GM12878 (cell line): ENCODE measurements at regions of chr12 and their contacts with region 1.

Region 1: DNA sequence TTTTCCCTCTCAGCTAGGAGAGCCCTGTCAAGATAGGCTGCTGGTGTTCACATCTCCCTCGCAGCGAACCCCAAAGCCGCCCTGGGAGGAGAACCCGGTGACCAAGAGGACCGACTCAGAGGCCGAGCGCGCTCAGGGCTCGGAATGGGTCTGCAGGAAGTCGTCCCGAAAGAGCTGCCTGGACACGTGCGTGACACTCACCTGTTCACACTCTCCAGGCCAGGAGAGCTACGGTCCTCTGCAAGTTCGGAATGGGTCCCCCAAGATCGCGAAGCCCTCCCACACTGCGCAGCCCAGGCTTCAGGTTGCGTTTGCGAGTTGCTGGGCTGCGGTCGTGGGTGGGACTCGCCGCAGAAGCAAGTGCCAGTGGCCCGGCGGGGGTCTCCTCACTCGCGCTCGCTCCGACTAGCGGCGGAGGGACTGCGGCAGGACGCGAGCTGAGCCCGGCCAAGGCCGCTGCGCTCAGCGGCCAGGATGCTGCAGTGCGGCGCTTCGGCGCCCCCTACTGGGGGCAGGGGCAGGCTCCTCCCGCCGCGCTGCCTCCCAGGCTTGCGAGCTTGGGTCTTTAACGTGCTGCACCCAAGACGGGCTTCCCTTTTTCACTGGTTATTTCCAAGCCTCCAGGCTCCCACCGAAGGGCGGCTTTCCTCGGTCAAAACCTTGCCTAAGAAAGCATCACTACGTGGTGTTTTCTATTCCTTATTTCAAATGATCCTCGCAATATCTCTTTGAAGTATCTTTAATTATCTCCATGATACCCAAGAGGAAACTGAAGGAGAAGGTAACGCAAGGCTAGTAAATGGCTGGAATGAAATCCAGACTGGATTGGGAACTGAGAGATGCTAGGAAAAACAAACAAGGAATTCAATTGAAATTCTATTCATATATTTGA is at the start of gene RERG:
- DNase-seq: peak; percentile 5
- ATAC-seq: peak; percentile 100
- H3K4me3 ChIP-seq: no peak within 1 kb of the TSS
- H3K27ac ChIP-seq: no peak within 1 kb of the TSS
- H3K4me1 ChIP-seq: no peaks in the 10 kb centered on the region
- H3K27me3 ChIP-seq: peaks cover 3% of the 10 kb centered on the region in 2 experiments; a peak in 3 of 4 replicates
- CTCF ChIP-seq: peak; percentile 84 to 92 (median 91); a peak in 5 of 6 replicates
- EP300 ChIP-seq: no peak
- POLR2A ChIP-seq: no peak
- RAD21 ChIP-seq: peak; percentile 65
- polyA plus RNA-seq, gene RERG: 0.05 to 0.11 TPM

Region 2: GRCh38 chr12:14845350-14845750 is 375.9 kb before region 1 on chr12:
- CTCF ChIA-PET with region 1: interaction called, 6 read pairs
- POLR2A ChIA-PET with region 1: no interaction called
- RAD21 ChIA-PET with region 1: interaction called, 6 read pairs
- SMC1A ChIA-PET with region 1: no interaction called
- in situ Hi-C with region 1: no loop called
- intact Hi-C with region 1: loop called (anchors 5 kb)
- DNase-seq: no peak
- ATAC-seq: peak; percentile 82
- H3K4me3 ChIP-seq: no peak overlapping the region
- H3K27ac ChIP-seq: no peak overlapping the region
- H3K4me1 ChIP-seq: no peaks in the 10 kb centered on the region
- H3K27me3 ChIP-seq: no peaks in the 10 kb centered on the region; a peak in 1 of 4 replicates
- CTCF ChIP-seq: peak; percentile 61 to 78 (median 62); a peak in 5 of 6 replicates
- EP300 ChIP-seq: no peak
- POLR2A ChIP-seq: no peak
- RAD21 ChIP-seq: peak; percentile 99

Region 3: GRCh38 chr12:15151161-15152120 is 69.8 kb before region 1 on chr12:
- CTCF ChIA-PET with region 1: interaction called, 10 read pairs
- POLR2A ChIA-PET with region 1: no interaction called
- RAD21 ChIA-PET with region 1: interaction called, 4 read pairs
- SMC1A ChIA-PET with region 1: interaction called, 3 read pairs
- in situ Hi-C with region 1: no loop called
- intact Hi-C with region 1: loop called (anchors 2 kb)
- DNase-seq: no peak
- ATAC-seq: peak; percentile 57
- H3K4me3 ChIP-seq: no peak overlapping the region
- H3K27ac ChIP-seq: no peak overlapping the region
- H3K4me1 ChIP-seq: no peaks in the 10 kb centered on the region
- H3K27me3 ChIP-seq: peaks cover 0 to 4% of the 10 kb centered on the region in 2 experiments; a peak in 1 of 4 replicates
- CTCF ChIP-seq: peak in 2 of 3 experiments; percentile 16 to 41; a peak in 2 of 6 replicates
- EP300 ChIP-seq: no peak
- POLR2A ChIP-seq: no peak
- RAD21 ChIP-seq: peak; percentile 14; the same call in 1 of the 2 replicates

Region 4: GRCh38 chr12:15200641-15201040 is 20.6 kb before region 1 on chr12:
- CTCF ChIA-PET with region 1: interaction called, 10 read pairs
- POLR2A ChIA-PET with region 1: no interaction called
- RAD21 ChIA-PET with region 1: no interaction called
- SMC1A ChIA-PET with region 1: interaction called, 4 read pairs
- in situ Hi-C with region 1: no loop called
- intact Hi-C with region 1: no loop called
- DNase-seq: no peak
- ATAC-seq: no peak
- H3K4me3 ChIP-seq: no peak overlapping the region
- H3K27ac ChIP-seq: no peak overlapping the region
- H3K4me1 ChIP-seq: no peaks in the 10 kb centered on the region
- H3K27me3 ChIP-seq: no peaks in the 10 kb centered on the region
- CTCF ChIP-seq: no peak
- EP300 ChIP-seq: no peak
- POLR2A ChIP-seq: no peak
- RAD21 ChIP-seq: no peak